K562 (cell line): ENCODE measurements at regions of chr11 and their contacts with region 1.

Region 1: DNA sequence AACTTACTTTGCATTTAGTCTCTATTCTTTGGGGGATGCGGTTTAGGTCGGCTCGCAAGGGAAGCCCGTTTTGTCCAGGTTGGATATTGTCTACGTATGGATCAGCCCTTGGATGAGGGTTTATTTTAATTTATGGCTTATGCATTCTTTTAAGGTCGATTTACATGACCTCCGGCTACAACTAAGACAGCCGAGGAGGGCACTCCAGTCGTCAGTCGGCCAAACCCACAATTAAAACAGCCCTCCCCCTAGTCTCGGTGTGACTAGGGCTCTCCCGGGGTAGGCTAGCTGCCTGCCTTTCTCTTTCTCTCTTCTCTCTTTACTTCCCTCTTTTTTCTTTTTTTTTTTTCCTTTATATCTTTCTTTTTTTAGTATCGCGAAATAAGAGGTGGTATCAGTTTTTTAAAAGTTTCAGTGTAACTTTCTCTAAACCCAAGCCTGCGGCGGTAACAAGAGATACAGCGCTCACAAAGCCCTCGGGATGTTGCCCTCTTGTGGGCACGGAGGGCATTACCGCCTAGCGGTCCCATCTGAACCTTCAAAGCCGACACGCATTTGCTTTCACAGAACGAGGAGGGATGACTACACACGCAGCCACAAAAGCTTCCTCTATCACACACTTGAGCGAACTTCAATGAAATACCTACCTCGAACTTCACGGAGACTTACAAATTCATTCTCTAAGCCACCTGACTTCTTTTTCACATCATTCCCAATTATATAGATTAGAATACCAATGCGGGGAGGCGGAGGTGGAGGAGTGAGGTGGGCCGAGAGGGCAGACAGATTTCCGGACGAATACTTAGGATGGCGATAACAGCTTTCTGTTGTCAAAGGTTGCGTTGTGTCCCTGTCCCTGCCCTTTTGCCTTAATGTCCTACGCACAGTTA is 132.3 kb upstream of the C11orf58 start:
- DNase-seq: peak; percentile 73 to 94 (median 78)
- ATAC-seq: peak; percentile 60
- H3K4me3 ChIP-seq: peak overlapping the region; percentile 71
- H3K27ac ChIP-seq: peak overlapping the region; percentile 90
- H3K4me1 ChIP-seq: peaks cover 16 to 45% of the 10 kb centered on the region in 2 experiments; a peak in 4 of 5 replicates
- H3K27me3 ChIP-seq: no peaks in the 10 kb centered on the region
- CTCF ChIP-seq: peak; percentile 88 to 94 (median 89)
- EP300 ChIP-seq: peak; percentile 13; the same call in 1 of the 2 replicates
- POLR2A ChIP-seq: no peak
- RAD21 ChIP-seq: peak; percentile 82 to 84

Region 2: GRCh38 chr11:15933886-15934625 is 672.1 kb before region 1 on chr11:
- CTCF ChIA-PET with region 1: no interaction called
- POLR2A ChIA-PET with region 1: interaction called, 3 read pairs
- in situ Hi-C with region 1: loop called (anchors 5 kb)
- intact Hi-C with region 1: no loop called
- DNase-seq: no peak
- ATAC-seq: no peak
- H3K4me3 ChIP-seq: no peak overlapping the region
- H3K27ac ChIP-seq: no peak overlapping the region
- H3K4me1 ChIP-seq: 0 out of 5 replicates have a peak, but pooled peaks cover 0 to 5% of the 10 kb centered on the region in 2 experiments
- H3K27me3 ChIP-seq: peaks cover 6 to 42% of the 10 kb centered on the region in 2 experiments; a peak in 4 of 5 replicates
- CTCF ChIP-seq: no peak
- EP300 ChIP-seq: no peak
- POLR2A ChIP-seq: no peak
- RAD21 ChIP-seq: no peak

Region 3: GRCh38 chr11:16043617-16044016 is 562.5 kb before region 1 on chr11:
- CTCF ChIA-PET with region 1: no interaction called
- POLR2A ChIA-PET with region 1: no interaction called
- in situ Hi-C with region 1: no loop called
- intact Hi-C with region 1: loop called (anchors 10 kb)
- DNase-seq: no peak
- ATAC-seq: no peak
- H3K4me3 ChIP-seq: no peak overlapping the region
- H3K27ac ChIP-seq: no peak overlapping the region
- H3K4me1 ChIP-seq: peaks cover 0 to 15% of the 10 kb centered on the region in 2 experiments; a peak in 2 of 5 replicates
- H3K27me3 ChIP-seq: no peaks in the 10 kb centered on the region
- CTCF ChIP-seq: no peak
- EP300 ChIP-seq: no peak
- POLR2A ChIP-seq: no peak
- RAD21 ChIP-seq: no peak

Region 4: GRCh38 chr11:16297332-16297731 is 308.8 kb before region 1 on chr11:
- CTCF ChIA-PET with region 1: no interaction called
- POLR2A ChIA-PET with region 1: no interaction called
- in situ Hi-C with region 1: no loop called
- intact Hi-C with region 1: loop called (anchors 5 kb)
- DNase-seq: peak; percentile 10 to 75 (median 22)
- ATAC-seq: peak; percentile 64
- H3K4me3 ChIP-seq: no peak overlapping the region
- H3K27ac ChIP-seq: peak overlapping the region; percentile 63
- H3K4me1 ChIP-seq: peaks cover 0 to 44% of the 10 kb centered on the region in 2 experiments; a peak in 4 of 5 replicates
- H3K27me3 ChIP-seq: no peaks in the 10 kb centered on the region
- CTCF ChIP-seq: no peak
- EP300 ChIP-seq: 0 out of 2 replicates have a peak, but pooled peaks have one; percentile 9
- POLR2A ChIP-seq: no peak
- RAD21 ChIP-seq: no peak

Region 5: GRCh38 chr11:16356057-16356760 is 249.9 kb before region 1 on chr11 and contains the start of gene SOX6:
- CTCF ChIA-PET with region 1: no interaction called
- POLR2A ChIA-PET with region 1: no interaction called
- in situ Hi-C with region 1: no loop called
- intact Hi-C with region 1: loop called (anchors 5 kb)
- DNase-seq: peak in 2 of 4 experiments; percentile 29 to 70
- ATAC-seq: peak; percentile 76
- H3K4me3 ChIP-seq: no peak within 1 kb of the TSS
- H3K27ac ChIP-seq: peak within 1 kb of the TSS; percentile 53
- H3K4me1 ChIP-seq: peaks cover 4 to 55% of the 10 kb centered on the region in 2 experiments; a peak in 4 of 5 replicates
- H3K27me3 ChIP-seq: no peaks in the 10 kb centered on the region
- CTCF ChIP-seq: peak in 1 of 3 experiments; percentile 29; a peak in 3 of 6 replicates
- EP300 ChIP-seq: no peak
- POLR2A ChIP-seq: no peak
- RAD21 ChIP-seq: peak in 1 of 2 experiments; percentile 57; a peak in 3 of 4 replicates
- polyA plus RNA-seq, gene SOX6: 0.89 to 2.9 TPM

Region 6: GRCh38 chr11:16454289-16454863 is 151.8 kb before region 1 on chr11:
- CTCF ChIA-PET with region 1: no interaction called
- POLR2A ChIA-PET with region 1: no interaction called
- in situ Hi-C with region 1: no loop called
- intact Hi-C with region 1: loop called (anchors 10 kb)
- DNase-seq: no peak
- ATAC-seq: no peak
- H3K4me3 ChIP-seq: no peak overlapping the region
- H3K27ac ChIP-seq: no peak overlapping the region
- H3K4me1 ChIP-seq: no peaks in the 10 kb centered on the region
- H3K27me3 ChIP-seq: no peaks in the 10 kb centered on the region
- CTCF ChIP-seq: no peak
- EP300 ChIP-seq: no peak
- POLR2A ChIP-seq: no peak
- RAD21 ChIP-seq: no peak

Region 7: GRCh38 chr11:16809886-16810668 is 203.9 kb after region 1 on chr11:
- CTCF ChIA-PET with region 1: no interaction called
- POLR2A ChIA-PET with region 1: no interaction called
- in situ Hi-C with region 1: no loop called
- intact Hi-C with region 1: no loop called
- DNase-seq: no peak
- ATAC-seq: no peak
- H3K4me3 ChIP-seq: no peak overlapping the region
- H3K27ac ChIP-seq: no peak overlapping the region
- H3K4me1 ChIP-seq: peaks cover 3 to 4% of the 10 kb centered on the region in 2 experiments; a peak in 3 of 5 replicates
- H3K27me3 ChIP-seq: peaks cover 54 to 80% of the 10 kb centered on the region in 2 experiments
- CTCF ChIP-seq: no peak
- EP300 ChIP-seq: no peak
- POLR2A ChIP-seq: no peak
- RAD21 ChIP-seq: no peak